ENCODE measurements at regions of chr3 and their contacts with region 1.

Region 1: DNA sequence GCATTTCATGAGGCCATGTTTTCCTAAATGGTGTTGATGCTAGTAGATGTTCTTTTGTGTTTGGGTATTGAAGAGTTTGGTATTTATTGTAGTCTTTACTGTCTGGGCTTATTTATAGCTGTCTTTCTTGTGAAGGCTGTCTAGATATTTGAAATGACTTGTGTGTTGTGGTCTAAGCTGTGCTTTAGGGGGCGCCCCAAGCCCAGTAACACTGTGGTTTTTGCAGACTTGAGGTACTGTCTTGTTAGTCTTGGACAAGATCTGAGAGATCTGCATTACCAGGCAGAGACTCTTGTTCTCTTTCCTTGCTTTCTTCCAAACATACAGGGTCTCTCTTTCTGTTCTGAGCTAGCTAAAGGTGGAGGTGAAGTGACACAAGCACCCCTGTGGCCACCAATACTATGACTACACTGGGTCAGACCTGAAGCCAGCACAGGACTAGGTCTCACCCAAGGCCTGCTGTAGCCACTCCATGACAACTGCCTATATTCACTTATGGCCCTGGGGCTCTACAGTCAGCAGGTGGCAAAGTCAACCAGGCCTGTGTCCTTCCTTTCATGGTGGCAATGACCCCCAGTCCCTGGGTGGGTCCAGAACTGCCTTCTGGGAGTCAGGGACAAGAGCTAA is 152.1 kb upstream of the TBC1D5 start:
- DNase-seq: peak; percentile 26
- H3K4me3 Mint-ChIP-seq: no peak overlapping the region
- H3K27ac Mint-ChIP-seq: no peak overlapping the region
- H3K4me1 Mint-ChIP-seq: peaks cover 2% of the 10 kb centered on the region
- H3K27me3 Mint-ChIP-seq: peaks cover 15% of the 10 kb centered on the region

Region 2: DNA sequence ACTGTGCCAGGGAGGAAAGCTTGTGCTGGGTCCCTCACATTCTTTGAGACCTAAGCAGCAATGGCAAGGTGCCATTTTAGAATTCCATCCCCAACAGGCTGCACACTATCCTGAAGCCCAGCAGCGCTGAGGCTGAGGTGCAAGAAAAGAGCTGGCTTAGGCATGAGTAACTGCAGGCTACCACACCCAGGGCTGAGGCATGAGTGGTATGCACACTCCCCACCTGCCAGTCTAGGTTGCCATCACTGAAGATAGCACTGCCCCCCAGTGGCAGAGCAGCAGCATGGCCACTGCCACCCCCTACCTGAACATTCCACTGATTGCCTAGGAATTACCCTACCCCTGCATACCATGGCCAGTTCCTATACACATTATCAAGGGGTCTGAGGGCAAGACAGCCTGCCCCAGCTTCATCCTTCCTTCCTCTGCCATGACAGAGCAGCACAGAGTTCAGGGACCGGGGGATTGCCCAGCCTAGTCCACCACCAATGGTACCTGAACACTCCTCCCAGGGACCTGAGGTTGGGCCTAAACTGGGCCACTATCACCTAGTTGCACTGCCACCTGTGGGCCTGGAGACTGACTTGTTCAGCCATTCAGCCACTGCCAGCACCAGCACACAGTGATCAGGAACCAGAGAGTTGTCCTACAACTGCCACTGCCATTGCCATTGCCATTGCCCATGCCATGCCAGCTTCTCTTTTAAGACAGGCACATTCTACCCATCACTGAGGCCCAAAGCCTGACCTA is 400.8 kb after region 1 on chr3:
- intact Hi-C with region 1: loop called (anchors 5 kb)
- DNase-seq: peak; percentile 9
- H3K4me3 Mint-ChIP-seq: no peak overlapping the region
- H3K27ac Mint-ChIP-seq: no peak overlapping the region
- H3K4me1 Mint-ChIP-seq: no peaks in the 10 kb centered on the region
- H3K27me3 Mint-ChIP-seq: peaks cover 5% of the 10 kb centered on the region

Region 3: GRCh38 chr3:18334837-18335601 is 440.5 kb after region 1 on chr3:
- intact Hi-C with region 1: loop called (anchors 5 kb)
- DNase-seq: no peak
- H3K4me3 Mint-ChIP-seq: no peak overlapping the region
- H3K27ac Mint-ChIP-seq: no peak overlapping the region
- H3K4me1 Mint-ChIP-seq: peaks cover 13% of the 10 kb centered on the region
- H3K27me3 Mint-ChIP-seq: peaks cover 3% of the 10 kb centered on the region